T-cell (primary cell): ENCODE measurements at regions of chr6 and their contacts with region 1.

Region 1: DNA sequence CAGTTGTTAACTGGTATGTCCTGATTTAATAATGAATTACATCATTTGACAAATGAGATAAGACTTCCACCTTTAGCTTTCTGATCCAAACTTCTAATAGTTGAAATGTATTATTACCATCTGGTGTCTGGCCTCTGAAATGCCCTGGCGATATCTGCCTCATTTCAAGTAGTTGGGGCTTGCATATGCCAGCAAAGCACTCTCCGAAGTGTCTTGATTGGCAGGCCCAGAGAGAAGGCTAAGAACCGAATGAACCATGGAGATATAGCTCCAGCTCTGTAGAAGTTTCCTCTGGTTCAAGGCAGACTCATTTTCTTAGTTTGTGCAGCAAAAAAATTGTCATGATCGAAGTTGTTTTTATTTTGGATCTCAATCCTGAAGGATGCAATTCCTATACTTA is 13.4 kb upstream of the HIVEP2 start:
- DNase-seq: no peak
- ATAC-seq: no peak
- H3K4me3 ChIP-seq: no peak overlapping the region
- H3K4me3 Mint-ChIP-seq: no peak overlapping the region
- H3K27ac ChIP-seq: no peak overlapping the region
- H3K27ac Mint-ChIP-seq: no peak overlapping the region
- H3K4me1 ChIP-seq: no peaks in the 10 kb centered on the region
- H3K4me1 Mint-ChIP-seq: peaks cover 2 to 3% (median 3%) of the 10 kb centered on the region in 3 donors
- H3K27me3 ChIP-seq: no peaks in the 10 kb centered on the region
- H3K27me3 Mint-ChIP-seq: no peaks in the 10 kb centered on the region

Region 2: GRCh38 chr6:142702501-142703460 is 255.6 kb before region 1 on chr6:
- CTCF ChIA-PET with region 1: interaction called in 1 of 2 experiments, 3 read pairs
- POLR2A ChIA-PET with region 1: interaction called in 1 of 2 experiments, 13 read pairs
- DNase-seq: peak in 1 of 35 experiments; percentile 25
- ATAC-seq: no peak
- H3K4me3 ChIP-seq: no peak overlapping the region
- H3K4me3 Mint-ChIP-seq: no peak overlapping the region
- H3K27ac ChIP-seq: no peak overlapping the region
- H3K27ac Mint-ChIP-seq: no peak overlapping the region
- H3K4me1 ChIP-seq: peaks cover 0 to 3% of the 10 kb centered on the region in 2 experiments
- H3K4me1 Mint-ChIP-seq: peaks cover 18 to 26% (median 24%) of the 10 kb centered on the region in 3 donors
- H3K27me3 ChIP-seq: no peaks in the 10 kb centered on the region
- H3K27me3 Mint-ChIP-seq: no peaks in the 10 kb centered on the region

Region 3: GRCh38 chr6:142784344-142784743 is 174.0 kb before region 1 on chr6:
- CTCF ChIA-PET with region 1: no interaction called
- POLR2A ChIA-PET with region 1: interaction called in 1 of 2 experiments, 11 read pairs
- DNase-seq: peak in 5 of 35 experiments; percentile 9 to 46 (median 23)
- ATAC-seq: peak; percentile 75 to 88 (median 84)
- H3K4me3 ChIP-seq: peak overlapping the region in 1 of 2 donors; percentile 15
- H3K4me3 Mint-ChIP-seq: peak overlapping the region in 1 of 3 donors; percentile 35
- H3K27ac ChIP-seq: no peak overlapping the region
- H3K27ac Mint-ChIP-seq: peak overlapping the region; percentile 59 to 73
- H3K4me1 ChIP-seq: peaks cover 10 to 19% of the 10 kb centered on the region in 2 experiments
- H3K4me1 Mint-ChIP-seq: peaks cover 67 to 76% (median 73%) of the 10 kb centered on the region in 3 donors
- H3K27me3 ChIP-seq: no peaks in the 10 kb centered on the region
- H3K27me3 Mint-ChIP-seq: no peaks in the 10 kb centered on the region